ENCODE measurements at regions of chr1 and their contacts with region 1.

Region 1: DNA sequence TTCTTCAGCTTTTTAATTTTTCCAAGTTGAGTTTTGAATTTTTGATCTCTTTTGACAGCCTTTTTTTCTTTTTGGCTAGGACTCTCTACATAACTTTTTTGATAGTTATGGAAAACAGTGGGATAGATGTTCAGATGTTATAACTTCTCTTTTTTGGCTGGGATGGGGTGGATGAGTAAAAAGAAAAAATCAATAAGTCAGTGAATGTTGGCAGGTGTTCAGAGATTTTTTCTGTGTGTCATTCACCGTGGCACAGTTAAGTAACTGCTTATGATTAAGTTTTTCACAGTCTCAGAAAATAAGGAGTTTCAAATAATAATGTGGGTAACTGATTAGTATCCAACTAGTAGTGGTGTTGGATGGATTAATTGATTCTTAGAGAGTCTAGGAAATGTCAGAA is 24.0 kb downstream of the HS2ST1 start:
- DNase-seq: no peak
- ATAC-seq: no peak
- H3K4me3 ChIP-seq: no peak overlapping the region
- H3K27ac ChIP-seq: no peak overlapping the region
- H3K4me1 ChIP-seq: no peaks in the 10 kb centered on the region
- H3K27me3 ChIP-seq: no peaks in the 10 kb centered on the region
- CTCF ChIP-seq: no peak
- POLR2A ChIP-seq: no peak

Region 2: DNA sequence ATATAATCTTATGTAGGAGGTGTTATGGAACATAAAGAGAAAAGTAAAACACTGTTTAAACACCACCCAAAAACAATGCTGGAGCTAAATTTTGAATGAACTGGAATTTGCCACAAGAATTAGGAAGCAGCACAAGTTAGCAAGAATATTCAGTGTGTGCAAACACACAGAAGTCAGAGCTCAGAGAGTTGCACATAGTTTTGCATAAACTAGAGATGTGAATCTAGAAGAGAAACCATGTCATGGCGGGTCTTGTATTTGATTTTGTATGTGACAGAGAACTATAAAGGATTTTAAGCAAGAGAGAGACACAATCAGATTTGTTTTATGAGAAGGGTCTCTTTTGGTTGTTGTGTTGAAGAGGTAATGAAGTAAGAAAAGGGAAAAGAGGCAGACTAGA is 62.7 kb before region 1 on chr1:
- in situ Hi-C with region 1: no loop called
- intact Hi-C with region 1: loop called (anchors 2 kb)
- DNase-seq: no peak
- ATAC-seq: no peak
- H3K4me3 ChIP-seq: no peak overlapping the region
- H3K27ac ChIP-seq: no peak overlapping the region
- H3K4me1 ChIP-seq: no peaks in the 10 kb centered on the region
- H3K27me3 ChIP-seq: no peaks in the 10 kb centered on the region
- CTCF ChIP-seq: no peak
- POLR2A ChIP-seq: no peak

Region 3: GRCh38 chr1:86888327-86888726 is 50.1 kb before region 1 on chr1:
- in situ Hi-C with region 1: no loop called
- intact Hi-C with region 1: no loop called
- DNase-seq: no peak
- ATAC-seq: no peak
- H3K4me3 ChIP-seq: no peak overlapping the region
- H3K27ac ChIP-seq: no peak overlapping the region
- H3K4me1 ChIP-seq: no peaks in the 10 kb centered on the region
- H3K27me3 ChIP-seq: no peaks in the 10 kb centered on the region
- CTCF ChIP-seq: no peak
- POLR2A ChIP-seq: no peak

Region 4: GRCh38 chr1:87084244-87084836 is 145.9 kb after region 1 on chr1:
- in situ Hi-C with region 1: no loop called
- intact Hi-C with region 1: no loop called
- DNase-seq: no peak
- ATAC-seq: no peak
- H3K4me3 ChIP-seq: no peak overlapping the region
- H3K27ac ChIP-seq: no peak overlapping the region
- H3K4me1 ChIP-seq: no peaks in the 10 kb centered on the region
- H3K27me3 ChIP-seq: no peaks in the 10 kb centered on the region
- CTCF ChIP-seq: peak; percentile 19 to 77 (median 46)
- POLR2A ChIP-seq: no peak